Endothelial cell of umbilical vein (primary cell): ENCODE measurements at regions of chr1 and their contacts with region 1.

Region 1: GRCh38 chr1:72498371-72498770 is 216.0 kb upstream of the NEGR1 start:
- DNase-seq: no peak
- H3K4me3 ChIP-seq: no peak overlapping the region
- H3K27ac ChIP-seq: no peak overlapping the region
- H3K4me1 ChIP-seq: no peaks in the 10 kb centered on the region
- H3K27me3 ChIP-seq: no peaks in the 10 kb centered on the region
- CTCF ChIP-seq: no peak
- POLR2A ChIP-seq: no peak

Region 2: DNA sequence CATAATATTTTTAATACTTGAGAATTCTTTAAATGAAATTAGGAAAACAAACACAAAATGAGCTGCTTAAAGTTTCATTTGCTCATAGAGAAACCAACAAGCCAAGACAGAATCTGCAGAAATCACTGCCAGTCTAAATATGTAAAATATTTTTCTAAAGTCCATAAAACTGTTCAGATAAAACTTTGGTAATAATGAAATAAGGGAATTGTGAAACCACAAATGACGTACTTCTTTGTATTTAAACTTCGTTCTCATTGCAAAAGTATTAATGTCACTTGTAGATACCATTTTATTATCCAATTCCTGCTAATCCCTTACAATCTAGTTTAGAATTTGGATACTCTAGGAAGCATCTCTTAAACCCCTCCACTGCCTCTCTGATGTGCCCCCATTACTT is 18.5 kb after region 1 on chr1:
- CTCF ChIA-PET with region 1: interaction called, 3 read pairs
- POLR2A ChIA-PET with region 1: no interaction called
- dilution Hi-C with region 1: no loop called
- intact Hi-C with region 1: loop called (anchors 2 kb)
- DNase-seq: no peak
- H3K4me3 ChIP-seq: no peak overlapping the region
- H3K27ac ChIP-seq: no peak overlapping the region
- H3K4me1 ChIP-seq: no peaks in the 10 kb centered on the region
- H3K27me3 ChIP-seq: no peaks in the 10 kb centered on the region
- CTCF ChIP-seq: no peak
- POLR2A ChIP-seq: no peak

Region 3: GRCh38 chr1:72530646-72531045 is 32.3 kb after region 1 on chr1:
- CTCF ChIA-PET with region 1: no interaction called
- POLR2A ChIA-PET with region 1: no interaction called
- dilution Hi-C with region 1: no loop called
- intact Hi-C with region 1: no loop called
- DNase-seq: no peak
- H3K4me3 ChIP-seq: no peak overlapping the region
- H3K27ac ChIP-seq: no peak overlapping the region
- H3K4me1 ChIP-seq: no peaks in the 10 kb centered on the region
- H3K27me3 ChIP-seq: no peaks in the 10 kb centered on the region
- CTCF ChIP-seq: no peak
- POLR2A ChIP-seq: no peak